Dendritic cell treated with granulocyte-macrophage colony-stimulating factor and Interleukin-4, amounts not matched to agents 40 ng/mL and 50 ng/mL, for 4 days (primary cell): ENCODE measurements at regions of chr1 and their contacts with region 1.

Region 1: DNA sequence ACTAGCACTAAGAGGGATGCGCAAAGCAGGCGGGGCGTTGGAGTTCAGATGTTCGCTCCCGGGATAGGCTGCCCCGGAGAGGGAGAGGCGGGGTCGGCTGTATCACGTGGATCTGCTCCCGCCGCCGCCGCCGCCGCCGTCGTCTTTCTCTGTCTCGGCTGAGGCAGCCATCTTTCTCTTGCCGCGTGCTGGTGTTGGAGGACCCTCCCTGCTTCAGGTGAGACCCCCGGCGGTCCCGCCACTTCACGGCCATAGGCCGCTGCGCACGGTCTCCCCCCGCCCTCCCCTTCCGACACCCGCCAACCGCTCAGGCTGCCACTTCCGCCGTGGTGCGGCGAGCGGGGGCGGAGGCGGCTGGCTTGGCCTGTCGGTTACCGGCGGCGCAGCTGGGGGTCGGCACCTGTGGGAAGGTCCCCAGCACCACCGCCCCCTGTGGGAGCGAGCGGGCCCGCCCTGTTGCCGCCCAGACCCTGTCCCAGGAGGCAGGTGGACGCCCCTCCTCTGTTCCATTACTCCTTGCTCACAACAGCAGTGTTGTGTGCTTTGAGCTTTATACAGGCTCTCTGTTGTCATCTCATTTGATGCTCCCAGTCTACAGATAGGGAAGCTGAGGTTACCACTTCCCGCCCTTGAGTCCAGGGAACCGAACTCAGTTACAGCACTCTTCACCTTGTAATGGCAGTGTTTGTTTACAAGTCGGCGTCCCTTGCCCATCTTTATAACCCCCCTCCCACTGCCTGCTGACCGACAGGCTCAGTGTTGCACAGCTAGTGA is at the start of gene BTF3L4:
- H3K4me3 Mint-ChIP-seq: peak within 1 kb of the TSS; percentile 99
- H3K27ac Mint-ChIP-seq: peak within 1 kb of the TSS; percentile 90
- H3K4me1 Mint-ChIP-seq: peaks cover 53% of the 10 kb centered on the region
- H3K27me3 Mint-ChIP-seq: no peaks in the 10 kb centered on the region

Region 2: DNA sequence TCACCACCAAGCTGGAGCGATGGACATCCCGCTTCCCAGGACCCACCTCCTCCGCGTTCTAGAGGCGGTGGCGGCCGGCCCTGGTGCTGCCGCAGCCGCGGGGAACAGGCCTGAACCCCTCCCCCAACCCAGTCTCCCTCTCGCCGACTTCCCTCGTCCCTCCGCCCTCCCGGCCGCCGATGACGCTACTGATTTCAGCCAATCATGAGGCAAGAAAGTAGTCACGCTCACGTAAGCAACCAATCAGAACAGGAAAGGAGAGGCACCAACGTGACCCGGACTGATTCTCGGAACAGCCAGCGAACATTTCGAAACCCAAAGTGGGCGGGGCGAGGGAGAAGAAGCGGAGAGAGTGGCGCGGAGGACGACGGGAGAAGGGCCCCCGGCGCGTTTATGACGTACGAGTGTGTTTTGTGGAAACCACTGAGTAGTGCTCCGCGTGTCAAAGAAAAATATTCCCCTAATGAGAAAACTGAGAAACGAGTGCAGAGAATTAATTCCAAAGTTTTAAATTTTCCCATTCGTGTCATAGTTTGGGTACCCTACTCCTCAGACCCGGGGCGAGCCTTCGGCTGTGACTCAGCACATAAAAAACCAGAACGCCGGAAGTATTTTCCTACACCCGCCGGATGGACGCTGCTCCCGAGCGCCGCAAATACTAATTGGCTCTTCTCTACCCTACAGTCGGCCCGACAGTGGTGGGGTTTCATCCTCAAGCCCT is 177.6 kb before region 1 on chr1 and contains the start of gene NRDC:
- intact Hi-C with region 1: loop called (anchors 2 kb)
- H3K4me3 Mint-ChIP-seq: no peak within 1 kb of the TSS
- H3K27ac Mint-ChIP-seq: no peak within 1 kb of the TSS
- H3K4me1 Mint-ChIP-seq: peaks cover 25% of the 10 kb centered on the region
- H3K27me3 Mint-ChIP-seq: peaks cover 14% of the 10 kb centered on the region

Region 3: DNA sequence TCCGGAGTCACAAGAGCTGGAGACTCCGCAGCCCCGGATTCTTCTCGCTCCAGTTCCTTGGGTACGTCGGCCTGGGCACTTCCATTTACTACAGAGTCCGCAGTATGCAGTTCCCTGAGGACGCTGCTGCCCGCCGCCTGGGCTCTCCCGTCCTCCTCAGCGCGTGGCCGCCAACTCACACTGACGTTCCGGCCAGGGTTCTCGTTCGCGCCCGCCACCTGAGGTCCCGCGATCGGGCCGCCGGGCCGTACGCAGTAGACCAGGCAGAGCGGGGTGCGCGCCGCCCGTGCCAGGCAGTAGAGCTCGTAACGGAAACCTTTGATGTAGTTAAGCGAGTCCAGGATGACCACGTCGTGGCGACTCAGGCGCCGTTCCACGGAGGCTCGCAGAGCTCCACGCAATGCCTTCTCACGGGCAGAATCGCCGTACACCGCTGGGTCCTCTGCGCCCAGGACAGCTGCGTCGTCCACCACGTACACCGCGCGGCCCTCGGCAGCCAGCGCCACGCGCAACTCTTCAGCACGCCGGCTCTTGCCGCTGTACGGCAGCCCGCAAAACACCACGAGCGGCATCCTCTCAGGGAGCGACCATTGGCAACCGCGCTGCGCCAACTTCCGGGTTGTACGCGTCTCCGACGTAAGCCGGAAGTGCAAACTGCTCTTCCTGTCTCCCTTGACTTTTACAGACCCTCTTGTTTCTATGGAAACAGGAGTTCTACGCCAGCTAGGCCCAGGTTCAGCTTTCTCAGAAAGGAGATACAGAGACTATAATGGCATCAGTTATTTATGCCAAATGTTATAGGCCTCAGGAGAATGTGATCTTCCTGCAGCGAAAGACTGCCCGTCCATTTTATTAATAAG is 22.9 kb before region 1 on chr1 and contains the start of gene KTI12:
- intact Hi-C with region 1: loop called (anchors 1 kb)
- H3K4me3 Mint-ChIP-seq: peak within 1 kb of the TSS; percentile 93
- H3K27ac Mint-ChIP-seq: peak within 1 kb of the TSS; percentile 97
- H3K4me1 Mint-ChIP-seq: peaks cover 26% of the 10 kb centered on the region
- H3K27me3 Mint-ChIP-seq: no peaks in the 10 kb centered on the region

Region 4: GRCh38 chr1:52404116-52404986 is 348.0 kb after region 1 on chr1 and contains the starts of genes ORC1 and PRPF38A:
- intact Hi-C with region 1: loop called (anchors 5 kb)
- H3K4me3 Mint-ChIP-seq: peak within 1 kb of the TSS; percentile 99
- H3K27ac Mint-ChIP-seq: peak within 1 kb of the TSS; percentile 88
- H3K4me1 Mint-ChIP-seq: peaks cover 33% of the 10 kb centered on the region
- H3K27me3 Mint-ChIP-seq: no peaks in the 10 kb centered on the region